Mammary epithelial cell (primary cell): ENCODE measurements at regions of chr7 and their contacts with region 1.

Region 1: GRCh38 chr7:136114966-136115762 is 138.0 kb upstream of the MTPN start:
- DNase-seq: peak; percentile 24
- H3K4me3 ChIP-seq: no peak overlapping the region
- H3K27ac ChIP-seq: no peak overlapping the region
- H3K4me1 ChIP-seq: no peaks in the 10 kb centered on the region
- H3K27me3 ChIP-seq: no peaks in the 10 kb centered on the region
- CTCF ChIP-seq: peak; percentile 64 to 73

Region 2: DNA sequence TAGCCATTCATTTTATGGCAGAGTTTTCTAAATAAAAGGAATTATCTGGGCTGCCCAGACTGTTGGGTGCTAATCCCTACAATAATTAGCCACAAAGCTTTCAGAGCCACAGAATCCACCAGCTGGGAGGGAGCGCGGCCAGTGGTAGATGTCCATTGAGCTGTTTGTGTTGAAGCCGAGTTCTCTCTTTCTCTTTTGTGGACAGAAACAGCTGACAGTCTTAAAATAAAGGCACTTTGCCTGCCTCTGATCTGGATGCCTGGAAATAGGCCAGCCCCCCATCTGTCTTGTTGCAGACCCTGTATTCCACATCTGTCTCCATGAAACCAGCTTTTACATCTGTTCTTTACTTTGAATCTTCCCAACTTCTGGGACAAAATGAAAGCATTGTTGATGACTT is 204.1 kb before region 1 on chr7:
- CTCF ChIA-PET with region 1: no interaction called
- dilution Hi-C with region 1: no loop called
- in situ Hi-C with region 1: no loop called
- intact Hi-C with region 1: no loop called
- DNase-seq: no peak
- H3K4me3 ChIP-seq: no peak overlapping the region
- H3K27ac ChIP-seq: no peak overlapping the region
- H3K4me1 ChIP-seq: peaks cover 10% of the 10 kb centered on the region
- H3K27me3 ChIP-seq: no peaks in the 10 kb centered on the region
- CTCF ChIP-seq: no peak

Region 3: DNA sequence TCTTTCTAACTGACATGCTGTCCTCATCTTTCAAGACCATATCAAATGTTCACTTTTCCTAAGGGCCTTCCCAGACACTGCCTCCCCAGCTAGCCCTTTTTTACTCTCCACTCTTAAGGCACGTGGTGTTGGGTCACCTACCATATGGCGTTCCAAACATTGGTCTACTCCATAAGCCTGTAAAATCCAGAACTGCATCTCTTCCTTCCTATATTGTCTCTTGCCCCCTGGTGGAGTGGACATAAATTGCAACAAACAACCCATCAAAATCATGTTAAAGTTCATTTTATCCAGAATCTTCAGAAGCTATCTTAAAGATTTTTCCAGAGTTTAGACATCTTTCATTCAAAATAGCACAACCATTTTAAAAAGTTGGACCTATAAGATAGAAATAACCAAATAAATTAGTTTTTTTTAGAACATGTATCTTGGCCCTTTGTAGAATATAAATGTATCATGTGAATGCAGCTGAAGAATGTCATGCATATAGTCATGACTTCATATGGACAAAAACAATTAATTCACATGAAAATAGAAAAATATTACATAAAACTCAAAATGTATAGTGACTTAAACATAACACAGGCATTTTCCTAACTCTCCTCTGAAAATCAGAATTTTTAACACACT is 572.6 kb after region 1 on chr7:
- CTCF ChIA-PET with region 1: no interaction called
- dilution Hi-C with region 1: no loop called
- in situ Hi-C with region 1: no loop called
- intact Hi-C with region 1: loop called (anchors 5 kb)
- DNase-seq: peak; percentile 13
- H3K4me3 ChIP-seq: no peak overlapping the region
- H3K27ac ChIP-seq: no peak overlapping the region
- H3K4me1 ChIP-seq: no peaks in the 10 kb centered on the region
- H3K27me3 ChIP-seq: no peaks in the 10 kb centered on the region
- CTCF ChIP-seq: peak; percentile 61 to 63